Mammary epithelial cell (primary cell): ENCODE measurements at regions of chr16 and their contacts with region 1.

Region 1: GRCh38 chr16:25270577-25270976 is 12.9 kb upstream of the ZKSCAN2 start:
- DNase-seq: no peak
- H3K4me3 ChIP-seq: no peak overlapping the region
- H3K27ac ChIP-seq: no peak overlapping the region
- H3K4me1 ChIP-seq: no peaks in the 10 kb centered on the region
- H3K27me3 ChIP-seq: no peaks in the 10 kb centered on the region
- CTCF ChIP-seq: no peak

Region 2: GRCh38 chr16:25224731-25225319 is 45.8 kb before region 1 on chr16:
- CTCF ChIA-PET with region 1: no interaction called
- dilution Hi-C with region 1: no loop called
- in situ Hi-C with region 1: no loop called
- intact Hi-C with region 1: no loop called
- DNase-seq: no peak
- H3K4me3 ChIP-seq: no peak overlapping the region
- H3K27ac ChIP-seq: no peak overlapping the region
- H3K4me1 ChIP-seq: no peaks in the 10 kb centered on the region
- H3K27me3 ChIP-seq: no peaks in the 10 kb centered on the region
- CTCF ChIP-seq: no peak

Region 3: GRCh38 chr16:25569011-25569410 is 298.4 kb after region 1 on chr16:
- CTCF ChIA-PET with region 1: no interaction called
- dilution Hi-C with region 1: no loop called
- in situ Hi-C with region 1: no loop called
- intact Hi-C with region 1: loop called (anchors 10 kb)
- DNase-seq: peak; percentile 77
- H3K4me3 ChIP-seq: no peak overlapping the region
- H3K27ac ChIP-seq: peak overlapping the region; percentile 25
- H3K4me1 ChIP-seq: peaks cover 26% of the 10 kb centered on the region
- H3K27me3 ChIP-seq: no peaks in the 10 kb centered on the region
- CTCF ChIP-seq: no peak